CD4-positive, alpha-beta memory T cell (primary cell): ENCODE measurements at regions of chr6 and their contacts with region 1.

Region 1: GRCh38 chr6:158793432-158793831 is 25.7 kb downstream of the EZR start:
- DNase-seq: peak in 3 of 5 donors; percentile 44 to 53 (median 46)
- H3K4me3 ChIP-seq: no peak overlapping the region
- H3K4me3 Mint-ChIP-seq: peak overlapping the region in 4 of 8 donors; percentile 19 to 67 (median 36)
- H3K27ac ChIP-seq: no peak overlapping the region
- H3K27ac Mint-ChIP-seq: peak overlapping the region; percentile 3 to 90 (median 77)
- H3K4me1 ChIP-seq: peaks cover 97% of the 10 kb centered on the region
- H3K4me1 Mint-ChIP-seq: peaks cover 66 to 91% (median 81%) of the 10 kb centered on the region in 4 donors
- H3K27me3 ChIP-seq: no peaks in the 10 kb centered on the region
- H3K27me3 Mint-ChIP-seq: no peaks in the 10 kb centered on the region

Region 2: DNA sequence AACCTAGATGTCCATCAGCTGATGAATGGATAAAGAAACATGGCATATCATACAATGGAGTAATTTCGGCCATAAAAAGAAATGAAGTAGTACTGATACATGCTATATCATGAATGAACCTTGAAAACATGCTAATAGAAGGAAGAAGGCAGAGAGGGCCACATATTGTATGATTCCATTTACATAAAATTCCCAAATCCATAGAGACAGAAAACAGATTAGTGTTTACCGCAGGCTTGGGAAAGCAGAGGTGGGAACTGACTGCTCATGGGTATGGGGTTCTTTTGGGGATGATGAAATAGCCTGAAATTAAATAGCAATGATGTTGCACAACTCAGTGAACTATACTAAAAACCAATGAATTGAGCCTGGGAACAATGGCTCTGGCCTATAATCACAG is 683.7 kb before region 1 on chr6:
- CTCF ChIA-PET with region 1: no interaction called
- POLR2A ChIA-PET with region 1: no interaction called
- intact Hi-C with region 1: no loop called
- DNase-seq: no peak
- H3K4me3 ChIP-seq: no peak overlapping the region
- H3K4me3 Mint-ChIP-seq: no peak overlapping the region
- H3K27ac ChIP-seq: no peak overlapping the region
- H3K27ac Mint-ChIP-seq: peak overlapping the region in 2 of 7 donors; percentile 3 to 25
- H3K4me1 ChIP-seq: no peaks in the 10 kb centered on the region
- H3K4me1 Mint-ChIP-seq: no peaks in the 10 kb centered on the region
- H3K27me3 ChIP-seq: no peaks in the 10 kb centered on the region
- H3K27me3 Mint-ChIP-seq: no peaks in the 10 kb centered on the region

Region 3: DNA sequence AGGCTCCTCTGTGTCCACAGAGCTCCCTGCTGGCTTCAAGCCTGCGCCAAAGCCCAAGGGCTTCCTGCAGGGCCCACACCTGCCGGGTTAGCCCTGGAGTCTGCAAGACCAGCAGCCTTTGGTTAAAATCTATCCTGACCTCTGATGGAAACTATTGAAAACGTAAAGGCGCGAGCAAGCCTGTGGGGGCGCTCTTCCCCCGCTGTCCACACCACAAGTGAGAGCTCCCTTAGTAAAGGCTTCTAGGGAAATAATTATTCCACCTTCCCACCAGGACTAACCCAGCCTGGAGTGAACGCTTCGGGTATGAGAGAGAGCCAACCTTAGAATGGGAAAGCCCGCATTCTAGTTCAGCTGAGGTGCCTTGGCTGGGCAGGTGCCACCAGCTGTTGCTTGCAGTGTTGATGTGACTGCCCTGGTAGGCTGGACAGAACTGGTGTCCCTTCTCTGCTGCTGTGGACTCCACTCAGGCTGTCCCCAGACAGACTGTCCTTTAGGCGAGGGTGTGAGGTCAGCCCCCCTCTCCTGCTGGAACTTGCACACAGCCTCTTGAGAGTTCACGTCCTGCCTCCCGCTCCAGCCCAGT is 74.9 kb before region 1 on chr6:
- CTCF ChIA-PET with region 1: interaction called, 5 read pairs
- POLR2A ChIA-PET with region 1: interaction called, 4 read pairs
- intact Hi-C with region 1: loop called (anchors 5 kb)
- DNase-seq: no peak
- H3K4me3 ChIP-seq: no peak overlapping the region
- H3K4me3 Mint-ChIP-seq: peak overlapping the region in 2 of 8 donors; percentile 80 to 82
- H3K27ac ChIP-seq: peak overlapping the region; percentile 25
- H3K27ac Mint-ChIP-seq: peak overlapping the region; percentile 53 to 95 (median 91)
- H3K4me1 ChIP-seq: peaks cover 62% of the 10 kb centered on the region
- H3K4me1 Mint-ChIP-seq: peaks cover 37 to 75% (median 53%) of the 10 kb centered on the region in 4 donors
- H3K27me3 ChIP-seq: no peaks in the 10 kb centered on the region
- H3K27me3 Mint-ChIP-seq: no peaks in the 10 kb centered on the region

Region 4: GRCh38 chr6:158803733-158804143 is 10.3 kb after region 1 on chr6:
- CTCF ChIA-PET with region 1: interaction called, 17 read pairs
- POLR2A ChIA-PET with region 1: interaction called, 12 read pairs
- intact Hi-C with region 1: no loop called
- DNase-seq: peak; percentile 68 to 78 (median 73)
- H3K4me3 ChIP-seq: peak overlapping the region; percentile 15 to 49
- H3K4me3 Mint-ChIP-seq: peak overlapping the region; percentile 71 to 90 (median 86)
- H3K27ac ChIP-seq: peak overlapping the region; percentile 52
- H3K27ac Mint-ChIP-seq: peak overlapping the region; percentile 85 to 96 (median 92)
- H3K4me1 ChIP-seq: peaks cover 98% of the 10 kb centered on the region
- H3K4me1 Mint-ChIP-seq: peaks cover 76 to 98% (median 86%) of the 10 kb centered on the region in 4 donors
- H3K27me3 ChIP-seq: no peaks in the 10 kb centered on the region
- H3K27me3 Mint-ChIP-seq: no peaks in the 10 kb centered on the region

Region 5: GRCh38 chr6:158819213-158819909 is 25.9 kb after region 1 on chr6 and contains the start of gene EZR:
- CTCF ChIA-PET with region 1: interaction called, 10 read pairs
- POLR2A ChIA-PET with region 1: interaction called, 119 read pairs
- intact Hi-C with region 1: no loop called
- DNase-seq: peak; percentile 82 to 86 (median 84)
- H3K4me3 ChIP-seq: peak within 1 kb of the TSS in 1 of 2 donors; percentile 77
- H3K4me3 Mint-ChIP-seq: peak within 1 kb of the TSS; percentile 79 to 98 (median 84)
- H3K27ac ChIP-seq: peak within 1 kb of the TSS; percentile 86
- H3K27ac Mint-ChIP-seq: peak within 1 kb of the TSS; percentile 84 to 100 (median 96)
- H3K4me1 ChIP-seq: peaks cover 31% of the 10 kb centered on the region
- H3K4me1 Mint-ChIP-seq: peaks cover 23 to 58% (median 27%) of the 10 kb centered on the region in 4 donors
- H3K27me3 ChIP-seq: no peaks in the 10 kb centered on the region
- H3K27me3 Mint-ChIP-seq: no peaks in the 10 kb centered on the region
- total RNA-seq, gene EZR: 264 to 277 TPM

Region 6: DNA sequence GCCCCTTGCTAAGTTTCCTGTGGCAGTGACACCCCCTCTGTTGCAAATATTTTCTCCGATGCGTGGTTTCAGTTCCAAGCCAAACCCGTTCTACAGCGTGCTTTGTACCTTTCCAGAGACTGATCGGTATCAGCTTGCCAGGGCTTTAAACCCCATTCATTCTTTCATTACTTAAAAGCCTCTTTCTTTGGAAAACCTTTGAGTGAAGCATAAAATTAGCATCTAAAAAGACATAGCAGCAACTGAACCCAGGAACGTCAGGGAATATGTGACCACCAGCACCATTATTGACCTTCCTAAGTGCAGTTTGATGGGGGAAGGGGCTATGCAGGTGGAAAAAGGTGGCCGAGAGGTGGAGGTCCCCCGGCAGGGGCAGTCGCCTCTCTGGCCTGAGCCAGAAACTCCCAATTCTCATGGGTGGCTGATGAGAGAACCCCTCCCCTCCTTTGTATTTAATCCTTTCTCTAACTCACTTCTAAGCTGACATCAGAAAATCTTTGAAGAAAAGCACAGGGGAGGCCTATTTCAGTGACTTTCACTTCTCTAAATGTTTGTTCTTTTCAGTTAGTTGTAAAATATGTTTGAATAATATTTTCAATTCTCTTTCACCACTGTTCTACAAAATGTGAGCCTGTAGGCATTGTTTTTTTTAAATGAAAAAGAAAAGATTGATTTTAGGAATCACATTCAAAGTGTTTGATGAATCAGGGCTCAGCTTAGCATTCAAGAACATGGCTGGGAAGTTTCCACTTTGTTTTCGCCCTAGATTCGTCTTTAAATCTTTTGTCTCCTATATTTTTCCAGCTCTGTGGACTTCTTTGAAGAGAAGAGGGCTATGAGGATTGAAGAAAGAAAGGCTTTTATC is 117.3 kb after region 1 on chr6:
- CTCF ChIA-PET with region 1: interaction called, 3 read pairs
- POLR2A ChIA-PET with region 1: interaction called, 3 read pairs
- intact Hi-C with region 1: loop called (anchors 5 kb)
- DNase-seq: peak in 2 of 5 donors; percentile 10 to 21
- H3K4me3 ChIP-seq: peak overlapping the region in 1 of 2 donors; percentile 21
- H3K4me3 Mint-ChIP-seq: peak overlapping the region; percentile 35 to 91 (median 66)
- H3K27ac ChIP-seq: no peak overlapping the region
- H3K27ac Mint-ChIP-seq: peak overlapping the region in 6 of 7 donors; percentile 23 to 83 (median 62)
- H3K4me1 ChIP-seq: peaks cover 33% of the 10 kb centered on the region
- H3K4me1 Mint-ChIP-seq: peaks cover 21 to 55% (median 31%) of the 10 kb centered on the region in 4 donors
- H3K27me3 ChIP-seq: no peaks in the 10 kb centered on the region
- H3K27me3 Mint-ChIP-seq: peaks cover 0 to 1% of the 10 kb centered on the region in 2 donors

Region 7: DNA sequence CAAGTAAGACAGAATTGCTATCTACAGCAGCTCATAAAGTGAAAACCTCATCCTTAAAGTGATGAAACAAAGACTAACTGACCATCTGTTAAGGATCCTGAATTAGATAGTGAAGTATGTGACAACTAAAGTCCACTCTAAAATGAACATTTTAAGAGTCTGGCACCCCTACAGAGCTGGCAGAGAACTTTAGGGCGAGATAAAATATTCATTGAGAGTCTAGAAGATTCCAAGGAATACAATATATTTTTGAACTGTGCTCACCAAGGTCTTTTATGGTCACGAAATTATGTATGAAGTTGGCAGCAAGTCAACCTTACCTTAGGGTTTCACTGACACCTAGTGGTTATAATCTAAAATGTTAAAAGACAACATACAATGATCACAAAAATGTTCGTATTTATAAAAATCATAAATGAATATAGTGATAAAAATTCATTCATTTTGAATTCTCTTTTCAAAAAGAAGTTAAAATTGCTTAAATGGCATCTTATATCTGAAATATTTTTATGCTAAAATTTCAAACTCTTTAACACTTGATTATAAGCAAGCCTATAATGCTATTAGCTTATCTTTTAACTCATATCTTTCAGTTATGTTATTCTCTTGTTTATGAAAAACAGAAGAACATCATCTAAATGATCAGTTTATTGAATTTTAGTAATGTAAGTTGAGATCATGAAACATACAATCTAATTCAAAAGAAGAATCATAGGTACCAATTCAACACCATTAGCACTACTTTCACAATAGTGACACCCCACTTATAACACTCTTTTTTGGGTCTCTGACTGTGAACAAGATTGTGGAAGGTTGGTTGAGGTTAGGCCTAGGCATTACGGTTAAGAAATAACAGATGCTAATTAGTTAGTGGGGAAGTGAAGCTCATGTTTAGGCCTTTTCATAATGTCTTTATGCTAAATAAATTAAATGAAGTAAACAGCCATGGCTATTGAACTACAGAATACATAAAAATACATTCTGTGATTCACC is 179.1 kb after region 1 on chr6:
- CTCF ChIA-PET with region 1: interaction called, 108 read pairs
- POLR2A ChIA-PET with region 1: interaction called, 10 read pairs
- intact Hi-C with region 1: loop called (anchors 1 kb)
- DNase-seq: peak in 4 of 5 donors; percentile 57 to 66 (median 60)
- H3K4me3 ChIP-seq: no peak overlapping the region
- H3K4me3 Mint-ChIP-seq: no peak overlapping the region
- H3K27ac ChIP-seq: no peak overlapping the region
- H3K27ac Mint-ChIP-seq: peak overlapping the region in 2 of 7 donors; percentile 31 to 47
- H3K4me1 ChIP-seq: no peaks in the 10 kb centered on the region
- H3K4me1 Mint-ChIP-seq: peaks cover 0 to 3% (median 0%) of the 10 kb centered on the region in 4 donors
- H3K27me3 ChIP-seq: no peaks in the 10 kb centered on the region
- H3K27me3 Mint-ChIP-seq: no peaks in the 10 kb centered on the region